Activated CD8-positive, alpha-beta T cell treated with anti-CD3 and anti-CD28 coated beads for 36 hours (primary cell): ENCODE measurements at regions of chr15 and their contacts with region 1.

Region 1: DNA sequence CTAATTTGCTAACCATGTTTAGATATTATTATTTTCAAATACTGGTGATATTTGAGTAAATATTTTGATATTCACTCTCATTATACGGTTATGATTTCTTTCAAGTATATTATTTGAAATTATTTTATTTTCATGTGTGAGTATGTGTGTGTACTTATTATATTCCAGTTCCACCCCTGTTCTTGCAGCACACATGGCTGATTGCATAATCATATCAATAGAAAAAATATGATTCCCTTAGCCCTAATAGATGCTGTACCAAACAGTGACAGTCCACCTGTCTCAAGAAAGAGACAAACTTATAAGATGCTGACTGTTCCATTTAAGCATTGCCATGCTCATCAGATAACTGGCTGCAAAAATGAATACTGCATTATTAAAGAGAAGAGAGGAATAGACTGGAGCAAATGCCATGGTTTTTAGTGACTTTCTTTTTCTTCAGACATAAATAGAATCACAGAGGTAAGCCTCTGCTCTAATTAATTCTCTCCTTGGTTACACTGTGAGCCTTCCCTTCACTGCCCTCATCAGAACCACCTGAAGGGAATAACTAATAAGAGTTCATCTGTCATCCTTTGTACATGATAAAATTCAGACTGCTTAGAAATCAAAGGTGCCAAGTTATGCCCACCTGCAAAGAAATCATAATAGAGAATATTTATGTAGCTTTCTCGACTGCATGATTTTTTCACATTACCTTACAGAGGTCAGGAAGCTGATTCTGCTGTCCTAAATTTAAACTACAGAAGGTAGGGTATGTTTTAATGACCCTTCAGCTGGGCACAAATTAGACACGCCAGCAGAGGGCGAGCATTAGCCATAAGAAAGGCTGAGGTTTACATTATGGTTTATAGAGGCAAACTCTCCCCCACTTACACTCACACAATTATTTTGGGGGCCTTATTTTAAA is 15.7 kb upstream of the UNC13C start:
- DNase-seq: peak; percentile 55
- ATAC-seq: no peak
- H3K4me3 Mint-ChIP-seq: no peak overlapping the region
- H3K27ac Mint-ChIP-seq: no peak overlapping the region
- H3K4me1 Mint-ChIP-seq: no peaks in the 10 kb centered on the region
- H3K27me3 Mint-ChIP-seq: no peaks in the 10 kb centered on the region
- CTCF ChIP-seq: peak; percentile 61

Region 2: GRCh38 chr15:55108858-55109518 is 1146.4 kb after region 1 on chr15:
- CTCF ChIA-PET with region 1: no interaction called
- POLR2A ChIA-PET with region 1: no interaction called
- intact Hi-C with region 1: loop called (anchors 5 kb)
- DNase-seq: peak; percentile 79
- ATAC-seq: peak; percentile 49
- H3K4me3 Mint-ChIP-seq: no peak overlapping the region
- H3K27ac Mint-ChIP-seq: no peak overlapping the region
- H3K4me1 Mint-ChIP-seq: no peaks in the 10 kb centered on the region
- H3K27me3 Mint-ChIP-seq: no peaks in the 10 kb centered on the region
- CTCF ChIP-seq: peak; percentile 92